H1 (cell line): ENCODE measurements at regions of chr13 and their contacts with region 1.

Region 1: GRCh38 chr13:42110410-42111155 is 62.1 kb downstream of the DGKH start:
- DNase-seq: no peak
- H3K4me3 ChIP-seq: no peak overlapping the region
- H3K27ac ChIP-seq: no peak overlapping the region
- H3K4me1 ChIP-seq: peaks cover 0 to 5% (median 0%) of the 10 kb centered on the region in 4 experiments; a peak in 1 of 7 replicates
- H3K27me3 ChIP-seq: no peaks in the 10 kb centered on the region
- CTCF ChIP-seq: peak in 2 of 3 experiments; percentile 41 to 68; a peak in 2 of 4 replicates
- EP300 ChIP-seq: no peak
- POLR2A ChIP-seq: no peak
- RAD21 ChIP-seq: peak; percentile 81 to 85

Region 2: DNA sequence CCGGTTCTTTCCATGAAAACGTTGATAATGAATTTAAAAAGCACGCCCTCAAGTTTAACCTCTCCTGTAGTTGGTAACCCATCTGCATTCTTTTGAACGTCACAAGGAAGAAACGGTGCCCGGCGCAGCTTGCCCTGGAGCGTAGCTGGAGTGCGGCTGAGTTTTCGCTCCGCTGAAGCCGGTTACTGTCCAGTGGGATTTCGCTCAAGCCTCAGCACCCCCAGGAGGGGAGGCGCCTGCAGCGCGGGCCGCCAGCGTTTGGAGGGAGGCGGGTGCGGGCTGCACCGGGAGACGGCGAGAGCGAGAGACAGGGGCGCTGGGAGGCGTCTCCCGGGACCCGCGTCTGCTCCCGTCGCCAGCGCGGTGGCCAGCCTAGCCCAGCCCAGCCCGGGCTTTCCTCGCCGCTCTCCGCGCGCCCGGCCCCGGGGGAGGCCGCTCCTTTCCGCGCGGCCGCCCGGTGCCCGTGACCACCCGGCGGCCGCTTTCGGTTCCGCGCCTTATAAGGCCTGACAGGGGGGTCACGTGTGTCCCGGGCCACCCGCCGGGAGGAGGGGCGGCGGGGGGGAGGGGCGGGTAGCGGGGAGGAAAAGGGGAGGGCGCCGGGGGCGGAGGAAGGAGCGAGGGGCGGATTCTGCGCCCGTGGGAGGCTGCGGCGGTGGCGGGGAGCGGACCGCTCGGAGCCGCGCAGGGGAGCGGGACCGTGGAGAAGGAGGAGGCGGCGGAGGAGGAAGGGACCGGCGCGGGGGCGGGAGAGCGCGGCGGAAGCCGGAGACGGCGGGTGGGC is 70.4 kb before region 1 on chr13:
- CTCF ChIA-PET with region 1: no interaction called
- POLR2A ChIA-PET with region 1: no interaction called
- DNase-seq: peak in 1 of 2 experiments; percentile 85
- H3K4me3 ChIP-seq: peak overlapping the region; percentile 65 to 87 (median 72)
- H3K27ac ChIP-seq: no peak overlapping the region; the same call in 1 of the 2 replicates
- H3K4me1 ChIP-seq: no peaks in the 10 kb centered on the region
- H3K27me3 ChIP-seq: peaks cover 6 to 30% (median 18%) of the 10 kb centered on the region in 4 experiments
- CTCF ChIP-seq: no peak
- EP300 ChIP-seq: no peak
- POLR2A ChIP-seq: peak in 1 of 2 experiments; percentile 74; a peak in 2 of 3 replicates
- RAD21 ChIP-seq: no peak

Region 3: GRCh38 chr13:42215578-42216421 is 105.2 kb after region 1 on chr13:
- CTCF ChIA-PET with region 1: interaction called, 14 read pairs
- POLR2A ChIA-PET with region 1: no interaction called
- DNase-seq: no peak
- H3K4me3 ChIP-seq: no peak overlapping the region
- H3K27ac ChIP-seq: no peak overlapping the region
- H3K4me1 ChIP-seq: peaks cover 0 to 7% (median 6%) of the 10 kb centered on the region in 4 experiments; a peak in 4 of 7 replicates
- H3K27me3 ChIP-seq: no peaks in the 10 kb centered on the region
- CTCF ChIP-seq: peak in 2 of 3 experiments; percentile 44 to 70; a peak in 3 of 4 replicates
- EP300 ChIP-seq: no peak
- POLR2A ChIP-seq: no peak
- RAD21 ChIP-seq: peak; percentile 82